SK-MEL-5 (cell line): ENCODE measurements at regions of chr11 and their contacts with region 1.

Region 1: DNA sequence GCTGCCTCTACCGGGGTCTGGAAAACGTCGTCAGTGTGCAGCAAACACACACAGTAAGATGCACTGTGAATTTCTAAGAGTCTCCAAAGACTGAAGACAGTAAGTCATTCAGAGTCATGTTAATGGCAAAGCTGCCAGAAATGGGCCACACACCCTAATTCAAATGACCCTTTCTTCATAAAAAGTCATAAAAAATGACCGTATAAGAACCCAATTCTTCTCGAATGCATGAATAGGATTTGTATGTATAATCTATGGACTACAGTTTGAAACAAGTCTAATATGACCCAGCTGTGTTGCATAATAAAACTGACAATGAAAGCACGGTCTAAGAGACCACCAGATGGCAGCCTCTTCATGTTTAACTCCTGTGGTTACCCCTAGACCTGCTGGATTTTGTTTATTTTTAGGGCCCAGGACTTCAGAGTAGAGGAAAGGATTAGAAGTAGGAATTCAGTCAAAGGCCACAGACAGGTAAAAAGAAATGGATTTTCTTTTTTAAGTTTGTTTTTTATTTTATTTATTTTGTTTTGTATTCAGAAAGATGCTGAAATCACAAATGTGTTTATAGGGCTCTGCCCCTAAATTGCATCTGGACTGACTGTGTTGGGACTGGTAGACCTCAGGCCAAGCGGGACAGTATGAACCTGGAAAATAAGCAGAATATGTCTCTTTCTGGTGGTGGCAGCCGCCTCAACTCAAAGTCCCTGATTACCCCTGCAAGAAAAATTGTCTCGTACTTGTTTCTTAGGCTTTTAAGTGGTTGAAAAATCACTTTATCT is 32.1 kb upstream of the SLC5A12 start:
- DNase-seq: peak; percentile 96

Region 2: GRCh38 chr11:27124514-27125264 is 370.8 kb after region 1 on chr11:
- in situ Hi-C with region 1: loop called (anchors 25 kb)
- DNase-seq: peak; percentile 28